Activated T-helper 2 cell treated with anti-CD3 and anti-CD28 coated beads, Interferon-gamma antibody, Interleukin-2, Interleukin-4, amounts not matched to agents 10 μg/mL and 5 μg/mL and 100 μg/mL, durations not matched to agents 14 hours and 24 hours and 36 hours (primary cell): ENCODE measurements at regions of chr1 and their contacts with region 1.

Region 1: GRCh38 chr1:173824331-173825081 is at the starts of genes CENPL and DARS2:
- DNase-seq: peak; percentile 91
- H3K4me3 Mint-ChIP-seq: peak within 1 kb of the TSS; percentile 98
- H3K27ac Mint-ChIP-seq: peak within 1 kb of the TSS; percentile 99
- H3K4me1 Mint-ChIP-seq: peaks cover 36% of the 10 kb centered on the region
- H3K27me3 Mint-ChIP-seq: no peaks in the 10 kb centered on the region
- total RNA-seq, gene CENPL: 26.1 and 26.2 TPM in 2 replicates
- total RNA-seq, gene DARS2: 49.7 and 49.9 TPM in 2 replicates

Region 2: DNA sequence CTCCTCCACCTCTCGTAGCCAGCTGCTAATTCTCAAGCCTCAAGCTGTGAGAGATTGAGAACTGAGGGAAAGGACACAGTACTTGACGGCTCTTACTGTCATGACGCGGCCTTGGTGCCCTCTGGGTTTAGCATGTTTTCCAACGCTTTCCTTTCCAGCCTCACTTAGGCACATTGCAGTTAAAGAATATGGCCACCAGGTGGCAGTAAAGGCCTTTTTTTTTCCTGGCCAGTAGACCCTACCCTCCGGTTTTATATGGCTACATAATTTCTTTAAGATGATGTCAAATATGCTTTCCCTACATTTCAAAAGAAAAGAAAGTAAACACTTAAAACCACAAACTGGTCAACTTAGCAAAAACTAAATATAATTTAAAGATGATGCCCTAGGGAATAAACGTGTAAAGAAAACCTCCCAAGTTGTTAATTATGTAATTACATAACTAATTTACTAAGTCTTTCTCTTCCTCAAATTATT is 404.1 kb before region 1 on chr1:
- intact Hi-C with region 1: loop called (anchors 1 kb)
- DNase-seq: peak; percentile 55
- H3K4me3 Mint-ChIP-seq: no peak overlapping the region
- H3K27ac Mint-ChIP-seq: no peak overlapping the region
- H3K4me1 Mint-ChIP-seq: peaks cover 3% of the 10 kb centered on the region
- H3K27me3 Mint-ChIP-seq: no peaks in the 10 kb centered on the region

Region 3: DNA sequence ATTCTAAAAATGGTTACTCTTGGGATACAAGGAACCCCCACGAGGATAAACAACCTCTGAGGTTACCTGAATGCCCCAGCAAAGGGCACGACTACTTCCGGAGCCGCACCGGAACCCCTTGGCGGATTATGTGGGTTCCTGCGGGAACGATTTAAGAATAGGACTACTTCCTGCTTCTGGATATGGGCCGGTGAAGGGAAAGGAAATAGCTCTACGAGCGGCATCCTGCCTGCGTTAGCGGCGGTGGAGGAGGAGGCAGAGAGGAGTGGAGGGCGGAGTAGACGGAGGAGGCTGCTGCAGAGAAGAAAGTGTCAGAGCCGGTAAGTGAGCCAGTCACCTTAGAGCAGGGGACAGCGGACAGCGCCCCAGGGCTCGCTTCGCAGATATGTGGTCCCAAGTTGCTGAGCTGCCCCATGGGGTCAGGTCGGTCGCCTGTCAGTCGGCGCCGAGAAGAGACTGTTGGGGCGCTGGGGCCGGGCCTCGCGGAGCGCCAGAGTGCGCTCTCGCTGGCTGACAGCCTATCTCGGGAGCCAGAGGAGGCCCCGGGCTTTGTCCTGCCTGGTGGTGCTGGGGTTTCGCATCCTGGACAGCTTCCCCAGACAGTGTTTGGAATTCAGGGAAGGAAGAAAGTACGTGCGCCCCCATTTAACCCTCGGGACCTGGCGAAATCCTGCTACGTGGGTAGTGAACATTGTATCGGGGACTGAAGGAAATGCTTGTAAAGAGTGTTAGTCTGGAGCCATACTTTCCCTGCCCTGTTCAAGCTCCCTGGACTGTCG is 109.6 kb before region 1 on chr1 and contains the start of gene KLHL20:
- intact Hi-C with region 1: loop called (anchors 1 kb)
- DNase-seq: peak; percentile 83
- H3K4me3 Mint-ChIP-seq: peak within 1 kb of the TSS; percentile 97
- H3K27ac Mint-ChIP-seq: peak within 1 kb of the TSS; percentile 94
- H3K4me1 Mint-ChIP-seq: peaks cover 18% of the 10 kb centered on the region
- H3K27me3 Mint-ChIP-seq: peaks cover 14% of the 10 kb centered on the region
- total RNA-seq, gene KLHL20: 15.4 and 17.6 TPM in 2 replicates

Region 4: GRCh38 chr1:174022080-174022975 is 197.8 kb after region 1 on chr1 and contains the start of gene RC3H1:
- intact Hi-C with region 1: loop called (anchors 1 kb)
- DNase-seq: peak; percentile 85
- H3K4me3 Mint-ChIP-seq: peak within 1 kb of the TSS; percentile 99
- H3K27ac Mint-ChIP-seq: peak within 1 kb of the TSS; percentile 90
- H3K4me1 Mint-ChIP-seq: peaks cover 35% of the 10 kb centered on the region
- H3K27me3 Mint-ChIP-seq: peaks cover 2% of the 10 kb centered on the region
- total RNA-seq, gene RC3H1: 30.4 and 33.5 TPM in 2 replicates